ENCODE measurements at regions of chr6 and their contacts with region 1.

Region 1: DNA sequence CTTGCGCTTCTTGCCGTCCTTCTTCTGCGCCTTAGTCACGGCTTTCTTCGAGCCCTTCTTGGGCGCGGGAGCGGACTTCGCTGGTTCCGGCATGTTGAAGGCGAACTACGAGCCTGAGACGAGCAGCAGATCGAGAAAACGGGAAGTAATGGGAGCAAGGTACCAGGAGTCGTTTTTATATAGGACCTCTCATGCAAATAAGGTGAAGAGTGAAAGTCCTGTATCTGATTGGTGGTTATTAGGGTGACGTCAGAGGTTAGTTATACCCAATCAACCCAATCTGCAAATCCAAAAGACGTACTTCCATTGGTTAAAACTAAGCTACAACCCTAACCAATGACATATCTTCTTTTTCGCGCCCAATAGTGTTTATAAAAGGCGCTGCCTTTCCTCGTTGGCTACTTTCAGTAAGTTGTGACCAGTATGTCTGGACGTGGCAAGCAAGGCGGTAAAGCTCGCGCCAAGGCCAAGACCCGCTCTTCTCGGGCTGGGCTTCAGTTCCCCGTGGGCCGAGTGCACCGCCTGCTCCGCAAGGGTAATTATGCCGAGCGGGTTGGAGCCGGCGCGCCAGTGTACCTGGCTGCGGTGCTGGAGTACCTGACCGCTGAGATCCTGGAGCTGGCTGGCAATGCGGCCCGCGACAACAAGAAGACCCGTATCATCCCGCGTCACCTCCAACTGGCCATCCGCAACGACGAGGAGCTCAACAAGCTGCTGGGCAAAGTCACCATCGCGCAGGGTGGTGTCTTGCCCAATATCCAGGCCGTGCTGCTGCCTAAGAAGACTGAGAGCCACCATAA is 100.6 kb upstream of the PRSS16 start:
- DNase-seq: peak; percentile 56 to 98 (median 74)
- ATAC-seq: peak; percentile 85
- H3K4me3 ChIP-seq: peak overlapping the region; percentile 71 to 77
- H3K4me3 Mint-ChIP-seq: no peak overlapping the region
- H3K27ac ChIP-seq: peak overlapping the region; percentile 84 to 91
- H3K27ac Mint-ChIP-seq: no peak overlapping the region
- H3K4me1 ChIP-seq: peaks cover 11% of the 10 kb centered on the region
- H3K4me1 Mint-ChIP-seq: peaks cover 13% of the 10 kb centered on the region
- H3K27me3 ChIP-seq: no peaks in the 10 kb centered on the region
- H3K27me3 Mint-ChIP-seq: no peaks in the 10 kb centered on the region
- CTCF ChIP-seq: no peak

Region 2: DNA sequence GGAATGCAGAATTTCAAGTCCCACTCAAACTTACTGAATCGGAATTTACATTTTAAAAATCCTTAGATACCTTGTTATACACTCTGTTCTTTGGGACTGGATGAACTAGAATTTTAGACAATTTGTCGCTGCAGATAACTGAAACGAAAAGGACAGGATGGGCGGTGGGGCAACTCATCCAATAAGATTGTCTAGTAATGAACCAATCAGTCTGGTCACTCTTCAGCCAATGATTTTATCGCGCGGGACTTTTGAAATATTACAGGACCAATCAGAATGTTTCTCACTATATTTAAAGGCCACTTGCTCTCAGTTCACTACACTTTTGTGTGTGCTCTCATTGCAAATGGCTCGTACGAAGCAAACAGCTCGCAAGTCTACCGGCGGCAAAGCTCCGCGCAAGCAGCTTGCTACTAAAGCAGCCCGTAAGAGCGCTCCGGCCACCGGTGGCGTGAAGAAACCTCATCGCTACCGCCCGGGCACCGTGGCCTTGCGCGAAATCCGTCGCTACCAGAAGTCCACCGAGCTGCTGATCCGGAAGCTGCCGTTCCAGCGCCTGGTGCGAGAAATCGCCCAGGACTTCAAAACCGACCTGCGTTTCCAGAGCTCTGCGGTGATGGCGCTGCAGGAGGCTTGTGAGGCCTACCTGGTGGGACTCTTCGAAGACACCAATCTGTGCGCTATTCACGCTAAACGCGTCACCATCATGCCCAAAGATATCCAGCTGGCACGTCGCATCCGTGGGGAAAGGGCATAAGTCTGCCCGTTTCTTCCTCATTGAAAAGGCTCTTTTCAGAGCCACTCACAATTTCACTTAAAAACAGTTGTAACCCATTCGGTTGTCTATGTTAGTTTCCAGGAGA is 1101.6 kb before region 1 on chr6:
- CTCF ChIA-PET with region 1: no interaction called
- POLR2A ChIA-PET with region 1: interaction called, 19 read pairs
- intact Hi-C with region 1: no loop called
- DNase-seq: peak; percentile 54 to 93 (median 79)
- ATAC-seq: peak; percentile 59
- H3K4me3 ChIP-seq: peak overlapping the region; percentile 67 to 76
- H3K4me3 Mint-ChIP-seq: peak overlapping the region; percentile 89
- H3K27ac ChIP-seq: peak overlapping the region; percentile 73 to 81
- H3K27ac Mint-ChIP-seq: peak overlapping the region; percentile 98
- H3K4me1 ChIP-seq: peaks cover 7% of the 10 kb centered on the region
- H3K4me1 Mint-ChIP-seq: peaks cover 14% of the 10 kb centered on the region
- H3K27me3 ChIP-seq: no peaks in the 10 kb centered on the region
- H3K27me3 Mint-ChIP-seq: no peaks in the 10 kb centered on the region
- CTCF ChIP-seq: no peak

Region 3: GRCh38 chr6:27016689-27017088 is 130.2 kb before region 1 on chr6:
- CTCF ChIA-PET with region 1: no interaction called
- POLR2A ChIA-PET with region 1: no interaction called
- intact Hi-C with region 1: no loop called
- DNase-seq: no peak
- ATAC-seq: no peak
- H3K4me3 ChIP-seq: no peak overlapping the region
- H3K4me3 Mint-ChIP-seq: no peak overlapping the region
- H3K27ac ChIP-seq: no peak overlapping the region
- H3K27ac Mint-ChIP-seq: no peak overlapping the region
- H3K4me1 ChIP-seq: peaks cover 10% of the 10 kb centered on the region
- H3K4me1 Mint-ChIP-seq: peaks cover 11% of the 10 kb centered on the region
- H3K27me3 ChIP-seq: no peaks in the 10 kb centered on the region
- H3K27me3 Mint-ChIP-seq: peaks cover 3% of the 10 kb centered on the region
- CTCF ChIP-seq: no peak

Region 4: DNA sequence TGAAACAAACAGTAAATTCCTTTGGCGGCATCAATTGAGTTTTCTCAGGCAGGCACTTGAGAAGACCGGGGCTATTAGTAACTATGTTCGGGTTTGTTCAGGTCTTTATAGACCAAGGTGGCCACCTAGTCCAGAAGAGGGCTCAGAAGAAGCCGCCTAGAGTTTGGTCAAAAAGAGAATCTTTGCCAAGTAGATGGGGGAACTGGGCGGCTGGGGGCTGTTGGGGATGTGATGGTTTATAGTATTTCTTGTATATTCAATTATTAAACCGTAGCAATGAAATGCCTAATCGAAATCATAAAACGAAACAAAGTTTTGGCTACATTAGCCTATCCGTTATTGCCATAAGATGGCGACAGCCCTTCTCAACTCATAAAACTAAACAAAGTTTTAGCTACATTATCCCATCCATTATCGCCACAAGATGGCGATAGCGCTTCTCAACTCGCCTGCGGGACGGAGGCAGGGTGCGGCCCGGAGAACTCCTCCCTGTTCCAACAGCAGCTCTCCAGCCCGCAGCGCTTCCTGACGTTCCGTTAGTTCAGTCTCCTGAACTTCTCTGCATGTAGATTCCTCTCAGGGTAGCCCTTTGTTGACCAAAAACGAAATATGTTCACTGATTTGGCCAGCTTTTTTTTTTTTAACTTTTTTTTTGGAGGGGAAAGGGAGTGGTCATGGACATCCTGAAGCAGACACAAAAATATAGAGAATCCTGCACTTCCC is 19.9 kb before region 1 on chr6:
- CTCF ChIA-PET with region 1: interaction called, 49 read pairs
- POLR2A ChIA-PET with region 1: interaction called, 333 read pairs
- intact Hi-C with region 1: loop called (anchors 1 kb)
- DNase-seq: peak; percentile 62 to 94 (median 81)
- ATAC-seq: peak; percentile 75
- H3K4me3 ChIP-seq: peak overlapping the region; percentile 24 to 31
- H3K4me3 Mint-ChIP-seq: peak overlapping the region; percentile 71
- H3K27ac ChIP-seq: peak overlapping the region in 1 of 2 experiments; percentile 52
- H3K27ac Mint-ChIP-seq: peak overlapping the region; percentile 77
- H3K4me1 ChIP-seq: peaks cover 14% of the 10 kb centered on the region
- H3K4me1 Mint-ChIP-seq: peaks cover 16% of the 10 kb centered on the region
- H3K27me3 ChIP-seq: no peaks in the 10 kb centered on the region
- H3K27me3 Mint-ChIP-seq: no peaks in the 10 kb centered on the region
- CTCF ChIP-seq: peak; percentile 95

Region 5: GRCh38 chr6:27177485-27178406 is 30.8 kb after region 1 on chr6:
- CTCF ChIA-PET with region 1: interaction called, 10 read pairs
- POLR2A ChIA-PET with region 1: interaction called, 33 read pairs
- intact Hi-C with region 1: no loop called
- DNase-seq: peak; percentile 46 to 89 (median 72)
- ATAC-seq: peak; percentile 69
- H3K4me3 ChIP-seq: peak overlapping the region; percentile 95 to 100
- H3K4me3 Mint-ChIP-seq: peak overlapping the region; percentile 93
- H3K27ac ChIP-seq: peak overlapping the region; percentile 48 to 68
- H3K27ac Mint-ChIP-seq: peak overlapping the region; percentile 91
- H3K4me1 ChIP-seq: no peaks in the 10 kb centered on the region
- H3K4me1 Mint-ChIP-seq: peaks cover 17% of the 10 kb centered on the region
- H3K27me3 ChIP-seq: no peaks in the 10 kb centered on the region
- H3K27me3 Mint-ChIP-seq: peaks cover 3% of the 10 kb centered on the region
- CTCF ChIP-seq: peak; percentile 11

Region 6: DNA sequence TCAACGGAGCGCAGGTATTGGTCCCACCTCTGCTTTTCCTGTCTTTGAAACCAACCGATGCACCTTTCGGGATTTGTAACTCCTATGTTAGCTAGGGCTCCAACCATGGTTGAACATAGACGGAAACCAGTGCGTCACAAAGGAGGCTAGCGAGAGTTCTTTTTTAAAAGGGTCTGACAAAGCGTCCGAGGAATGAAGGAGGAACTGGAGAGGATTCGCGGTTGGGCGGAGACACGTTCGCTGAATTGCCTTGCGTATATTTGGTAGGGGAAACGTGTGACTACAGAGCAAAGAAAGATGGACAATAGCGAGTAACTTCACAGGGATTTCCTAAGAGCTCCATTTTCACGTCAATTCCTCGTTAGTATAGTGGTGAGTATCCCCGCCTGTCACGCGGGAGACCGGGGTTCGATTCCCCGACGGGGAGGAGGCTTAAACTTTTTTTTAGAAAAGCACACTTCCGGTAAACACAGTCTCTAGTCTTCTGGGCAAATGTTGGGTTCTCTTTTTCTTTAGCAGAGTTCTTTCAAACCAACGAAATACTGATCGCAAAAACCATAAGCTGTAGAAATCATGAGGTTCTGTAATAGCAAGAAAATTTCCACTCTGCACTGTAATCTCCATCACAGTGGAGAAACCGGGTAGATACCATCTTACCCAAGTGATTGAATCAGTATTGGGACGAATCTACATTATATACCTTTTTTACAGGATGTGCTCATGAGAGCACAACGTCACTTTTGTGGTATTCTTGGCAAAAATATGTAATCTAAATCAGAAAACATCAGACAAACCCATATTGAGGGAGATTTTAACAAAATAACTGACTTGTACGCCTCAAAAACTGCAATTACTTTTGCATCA is 332.6 kb after region 1 on chr6:
- CTCF ChIA-PET with region 1: interaction called, 3 read pairs
- POLR2A ChIA-PET with region 1: interaction called, 20 read pairs
- intact Hi-C with region 1: no loop called
- DNase-seq: peak; percentile 83 to 97 (median 87)
- ATAC-seq: peak; percentile 69
- H3K4me3 ChIP-seq: peak overlapping the region; percentile 79 to 96
- H3K4me3 Mint-ChIP-seq: no peak overlapping the region
- H3K27ac ChIP-seq: peak overlapping the region; percentile 96 to 99
- H3K27ac Mint-ChIP-seq: no peak overlapping the region
- H3K4me1 ChIP-seq: peaks cover 13% of the 10 kb centered on the region
- H3K4me1 Mint-ChIP-seq: peaks cover 9% of the 10 kb centered on the region
- H3K27me3 ChIP-seq: no peaks in the 10 kb centered on the region
- H3K27me3 Mint-ChIP-seq: no peaks in the 10 kb centered on the region
- CTCF ChIP-seq: no peak

Region 7: DNA sequence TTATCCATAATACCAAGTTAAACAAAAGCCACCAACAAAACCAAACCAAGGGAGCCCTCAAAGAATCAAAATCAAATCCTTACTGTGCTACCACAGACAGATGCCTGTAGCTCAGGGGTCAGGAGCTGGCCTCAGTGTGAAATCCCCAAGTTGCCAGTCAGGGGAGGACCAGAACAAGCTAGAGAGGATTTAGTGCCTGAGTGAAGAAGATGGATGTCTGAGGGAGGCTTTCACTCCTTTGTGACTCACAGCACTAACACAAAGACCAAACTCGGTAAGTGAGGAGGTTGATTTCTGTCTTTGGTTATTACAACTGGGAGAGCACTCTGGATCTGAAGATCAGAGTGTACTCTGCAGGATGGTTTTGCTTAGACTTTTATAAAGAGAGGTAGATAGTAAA is 515.9 kb after region 1 on chr6:
- CTCF ChIA-PET with region 1: no interaction called
- POLR2A ChIA-PET with region 1: no interaction called
- intact Hi-C with region 1: no loop called
- DNase-seq: no peak
- ATAC-seq: no peak
- H3K4me3 ChIP-seq: no peak overlapping the region
- H3K4me3 Mint-ChIP-seq: no peak overlapping the region
- H3K27ac ChIP-seq: no peak overlapping the region
- H3K27ac Mint-ChIP-seq: no peak overlapping the region
- H3K4me1 ChIP-seq: no peaks in the 10 kb centered on the region
- H3K4me1 Mint-ChIP-seq: peaks cover under 1% of the 10 kb centered on the region
- H3K27me3 ChIP-seq: peaks cover 21 to 27% of the 10 kb centered on the region in 2 experiments
- H3K27me3 Mint-ChIP-seq: peaks cover 48% of the 10 kb centered on the region
- CTCF ChIP-seq: no peak

Region 8: GRCh38 chr6:27825025-27825793 is 678.3 kb after region 1 on chr6:
- CTCF ChIA-PET with region 1: no interaction called
- POLR2A ChIA-PET with region 1: interaction called, 16 read pairs
- intact Hi-C with region 1: no loop called
- DNase-seq: peak in 1 of 9 experiments; percentile 45
- ATAC-seq: peak; percentile 6
- H3K4me3 ChIP-seq: peak overlapping the region; percentile 55 to 76
- H3K4me3 Mint-ChIP-seq: peak overlapping the region; percentile 89
- H3K27ac ChIP-seq: peak overlapping the region; percentile 81 to 91
- H3K27ac Mint-ChIP-seq: peak overlapping the region; percentile 99
- H3K4me1 ChIP-seq: peaks cover 24% of the 10 kb centered on the region
- H3K4me1 Mint-ChIP-seq: peaks cover 32% of the 10 kb centered on the region
- H3K27me3 ChIP-seq: no peaks in the 10 kb centered on the region
- H3K27me3 Mint-ChIP-seq: no peaks in the 10 kb centered on the region
- CTCF ChIP-seq: no peak

Region 9: DNA sequence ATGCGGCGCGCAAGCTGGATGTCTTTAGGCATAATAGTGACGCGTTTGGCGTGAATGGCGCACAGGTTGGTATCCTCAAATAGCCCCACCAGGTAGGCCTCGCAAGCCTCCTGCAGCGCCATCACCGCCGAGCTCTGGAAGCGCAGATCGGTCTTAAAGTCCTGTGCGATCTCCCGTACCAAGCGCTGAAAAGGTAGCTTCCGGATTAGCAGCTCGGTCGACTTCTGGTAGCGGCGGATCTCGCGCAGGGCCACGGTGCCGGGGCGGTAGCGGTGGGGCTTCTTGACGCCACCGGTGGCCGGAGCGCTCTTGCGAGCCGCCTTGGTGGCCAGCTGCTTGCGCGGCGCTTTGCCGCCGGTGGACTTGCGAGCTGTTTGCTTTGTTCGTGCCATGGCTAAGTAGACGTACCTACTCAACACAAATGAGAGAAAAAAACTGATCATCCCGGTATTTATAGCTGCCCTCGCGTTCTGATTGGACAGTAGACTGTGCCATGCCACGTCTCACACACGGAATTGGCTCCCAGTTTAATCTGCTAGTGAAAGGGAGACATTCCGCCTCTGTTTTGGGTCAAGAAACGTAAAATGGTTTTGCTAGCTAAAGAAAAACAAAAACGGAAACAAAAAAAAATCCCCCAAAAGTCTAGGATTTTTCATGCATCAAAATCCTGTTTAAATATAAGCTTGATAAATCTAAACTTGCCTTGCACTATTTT is 725.2 kb after region 1 on chr6:
- CTCF ChIA-PET with region 1: no interaction called
- POLR2A ChIA-PET with region 1: interaction called, 38 read pairs
- intact Hi-C with region 1: no loop called
- DNase-seq: peak; percentile 72 to 97 (median 85)
- ATAC-seq: peak; percentile 75
- H3K4me3 ChIP-seq: peak overlapping the region; percentile 54 to 67
- H3K4me3 Mint-ChIP-seq: peak overlapping the region; percentile 82
- H3K27ac ChIP-seq: peak overlapping the region; percentile 81 to 86
- H3K27ac Mint-ChIP-seq: peak overlapping the region; percentile 98
- H3K4me1 ChIP-seq: peaks cover 20% of the 10 kb centered on the region
- H3K4me1 Mint-ChIP-seq: peaks cover 36% of the 10 kb centered on the region
- H3K27me3 ChIP-seq: peaks cover 0 to 3% of the 10 kb centered on the region in 2 experiments
- H3K27me3 Mint-ChIP-seq: no peaks in the 10 kb centered on the region
- CTCF ChIP-seq: peak; percentile 48